ENCODE measurements at regions of chr11 and their contacts with region 1.

Region 1: GRCh38 chr11:12893787-12894672 is 115.1 kb upstream of the RASSF10 start:
- DNase-seq: peak; percentile 55
- ATAC-seq: peak; percentile 17 to 54

Region 2: GRCh38 chr11:12331239-12331874 is 562.7 kb before region 1 on chr11:
- intact Hi-C with region 1: loop called (anchors 2 to 5 kb)
- DNase-seq: peak; percentile 88
- ATAC-seq: peak; percentile 82 to 86

Region 3: GRCh38 chr11:12411806-12412727 is 482.0 kb before region 1 on chr11:
- intact Hi-C with region 1: loop called in 1 of 2 experiments (anchors 2 kb)
- DNase-seq: peak; percentile 74
- ATAC-seq: peak; percentile 83 to 85

Region 4: DNA sequence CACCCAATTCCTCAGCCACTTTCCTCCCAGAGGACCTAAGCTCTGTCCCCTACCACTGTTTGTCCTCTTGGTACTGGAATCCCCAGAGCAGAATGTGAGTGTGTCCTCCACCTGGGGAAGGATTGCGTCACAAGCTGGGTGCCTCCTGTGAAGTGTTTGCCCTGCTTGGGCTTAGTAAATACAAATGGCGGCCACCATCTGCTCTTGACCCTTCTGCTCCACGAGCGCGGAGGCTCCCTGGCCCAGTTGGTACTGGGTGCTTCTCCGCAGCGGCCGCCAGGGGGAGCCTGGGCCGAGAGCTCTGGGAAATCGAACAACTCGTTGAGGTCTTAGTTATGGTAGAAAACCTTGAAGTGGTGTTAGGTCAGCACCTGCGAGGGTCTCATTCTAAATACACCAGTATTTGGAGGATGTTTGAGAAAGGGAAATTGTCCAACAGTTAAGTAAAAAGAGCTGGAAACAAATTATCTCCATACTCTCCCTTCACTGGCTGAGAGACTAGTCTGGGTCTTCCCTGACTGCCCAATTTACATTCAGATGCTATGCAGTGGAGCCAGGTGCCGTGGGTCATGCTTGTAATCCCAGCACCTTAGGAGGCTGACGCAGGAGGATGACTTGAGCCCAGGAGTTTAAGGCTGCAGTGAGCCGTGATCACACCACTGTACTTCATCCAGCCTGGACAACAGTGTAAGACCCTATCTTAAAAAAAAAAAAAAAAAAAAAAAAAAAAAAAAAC is 294.5 kb before region 1 on chr11:
- intact Hi-C with region 1: loop called in 1 of 2 experiments (anchors 5 kb)
- DNase-seq: peak; percentile 46
- ATAC-seq: peak in 1 of 2 donors; percentile 66

Region 5: GRCh38 chr11:13160346-13160745 is 266.3 kb after region 1 on chr11:
- intact Hi-C with region 1: no loop called
- DNase-seq: no peak
- ATAC-seq: no peak

Measured in left cardiac atrium (tissue), 4 donors.